ENCODE measurements at regions of chr4 and their contacts with region 1.

Region 1: DNA sequence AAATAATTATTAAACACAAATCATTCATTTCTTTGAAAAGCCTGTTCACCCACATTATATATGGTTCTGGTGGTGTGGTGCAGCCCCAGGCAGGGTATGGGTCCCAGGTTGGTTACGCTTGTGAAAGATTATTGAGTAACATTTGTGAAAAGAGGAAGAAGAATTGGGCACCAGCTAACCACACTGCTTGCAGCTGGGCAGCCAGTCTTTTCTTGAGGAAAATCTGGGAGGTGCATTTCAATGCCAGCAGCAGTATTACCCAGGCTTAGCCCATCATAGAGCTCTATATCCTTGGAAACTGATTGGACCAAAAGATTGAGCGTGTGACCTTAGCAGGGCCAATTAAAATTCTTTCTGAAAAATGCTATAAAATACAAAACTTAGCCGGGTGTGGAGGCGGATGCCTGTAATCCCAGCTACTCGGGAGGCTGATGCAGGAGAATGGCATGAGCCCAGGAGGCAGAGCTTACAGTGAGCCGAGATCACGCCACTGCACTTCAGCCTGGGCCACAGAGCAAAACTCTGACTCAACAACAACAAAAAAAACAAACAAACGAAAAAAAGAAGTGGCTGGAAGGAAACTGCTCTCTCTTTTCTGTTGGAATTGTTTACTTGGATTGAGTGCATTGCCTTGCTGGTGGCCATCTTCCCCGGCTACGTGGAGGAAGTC is 9.7 kb upstream of the PLAC8 start:
- DNase-seq: no peak
- ATAC-seq: no peak
- H3K4me3 Mint-ChIP-seq: no peak overlapping the region
- H3K27ac Mint-ChIP-seq: no peak overlapping the region
- H3K4me1 Mint-ChIP-seq: peaks cover 11% of the 10 kb centered on the region
- H3K27me3 Mint-ChIP-seq: no peaks in the 10 kb centered on the region

Region 2: GRCh38 chr4:82957045-82957444 is 167.2 kb before region 1 on chr4:
- CTCF ChIA-PET with region 1: no interaction called
- POLR2A ChIA-PET with region 1: no interaction called
- intact Hi-C with region 1: no loop called
- DNase-seq: no peak
- ATAC-seq: peak; percentile 47
- H3K4me3 Mint-ChIP-seq: no peak overlapping the region
- H3K27ac Mint-ChIP-seq: no peak overlapping the region
- H3K4me1 Mint-ChIP-seq: peaks cover 10% of the 10 kb centered on the region
- H3K27me3 Mint-ChIP-seq: no peaks in the 10 kb centered on the region

Region 3: GRCh38 chr4:83093130-83093529 is 31.1 kb before region 1 on chr4:
- CTCF ChIA-PET with region 1: no interaction called
- POLR2A ChIA-PET with region 1: interaction called, 12 read pairs
- intact Hi-C with region 1: no loop called
- DNase-seq: no peak
- ATAC-seq: no peak
- H3K4me3 Mint-ChIP-seq: no peak overlapping the region
- H3K27ac Mint-ChIP-seq: peak overlapping the region; percentile 7
- H3K4me1 Mint-ChIP-seq: peaks cover 24% of the 10 kb centered on the region
- H3K27me3 Mint-ChIP-seq: no peaks in the 10 kb centered on the region

Region 4: DNA sequence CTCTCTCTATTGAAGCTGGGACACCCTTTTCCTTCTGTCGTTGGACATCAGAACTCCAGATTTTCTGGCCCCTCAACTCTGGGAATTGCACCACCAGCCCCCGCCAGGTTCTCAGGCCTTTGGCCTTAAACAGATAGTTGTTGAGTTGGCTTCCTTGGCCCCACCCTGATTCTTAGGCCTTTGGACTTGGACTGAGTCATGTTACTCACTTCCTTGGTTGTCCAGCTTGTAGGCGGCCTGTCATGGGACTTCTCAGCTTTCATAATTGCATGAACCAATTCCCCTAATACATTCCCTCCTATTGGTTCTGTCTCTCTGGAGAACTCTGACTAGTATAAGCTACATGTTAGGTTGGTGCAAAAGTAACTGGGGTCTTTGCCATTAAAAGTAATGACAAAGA is 607.4 kb after region 1 on chr4:
- CTCF ChIA-PET with region 1: no interaction called
- POLR2A ChIA-PET with region 1: no interaction called
- intact Hi-C with region 1: no loop called
- DNase-seq: no peak
- ATAC-seq: no peak
- H3K4me3 Mint-ChIP-seq: no peak overlapping the region
- H3K27ac Mint-ChIP-seq: no peak overlapping the region
- H3K4me1 Mint-ChIP-seq: no peaks in the 10 kb centered on the region
- H3K27me3 Mint-ChIP-seq: peaks cover 8% of the 10 kb centered on the region

Region 5: GRCh38 chr4:84070289-84070688 is 946.0 kb after region 1 on chr4:
- CTCF ChIA-PET with region 1: no interaction called
- POLR2A ChIA-PET with region 1: no interaction called
- intact Hi-C with region 1: no loop called
- DNase-seq: no peak
- ATAC-seq: no peak
- H3K4me3 Mint-ChIP-seq: no peak overlapping the region
- H3K27ac Mint-ChIP-seq: no peak overlapping the region
- H3K4me1 Mint-ChIP-seq: no peaks in the 10 kb centered on the region
- H3K27me3 Mint-ChIP-seq: peaks cover 4% of the 10 kb centered on the region